ENCODE measurements at regions of chr17 and their contacts with region 1.

Region 1: DNA sequence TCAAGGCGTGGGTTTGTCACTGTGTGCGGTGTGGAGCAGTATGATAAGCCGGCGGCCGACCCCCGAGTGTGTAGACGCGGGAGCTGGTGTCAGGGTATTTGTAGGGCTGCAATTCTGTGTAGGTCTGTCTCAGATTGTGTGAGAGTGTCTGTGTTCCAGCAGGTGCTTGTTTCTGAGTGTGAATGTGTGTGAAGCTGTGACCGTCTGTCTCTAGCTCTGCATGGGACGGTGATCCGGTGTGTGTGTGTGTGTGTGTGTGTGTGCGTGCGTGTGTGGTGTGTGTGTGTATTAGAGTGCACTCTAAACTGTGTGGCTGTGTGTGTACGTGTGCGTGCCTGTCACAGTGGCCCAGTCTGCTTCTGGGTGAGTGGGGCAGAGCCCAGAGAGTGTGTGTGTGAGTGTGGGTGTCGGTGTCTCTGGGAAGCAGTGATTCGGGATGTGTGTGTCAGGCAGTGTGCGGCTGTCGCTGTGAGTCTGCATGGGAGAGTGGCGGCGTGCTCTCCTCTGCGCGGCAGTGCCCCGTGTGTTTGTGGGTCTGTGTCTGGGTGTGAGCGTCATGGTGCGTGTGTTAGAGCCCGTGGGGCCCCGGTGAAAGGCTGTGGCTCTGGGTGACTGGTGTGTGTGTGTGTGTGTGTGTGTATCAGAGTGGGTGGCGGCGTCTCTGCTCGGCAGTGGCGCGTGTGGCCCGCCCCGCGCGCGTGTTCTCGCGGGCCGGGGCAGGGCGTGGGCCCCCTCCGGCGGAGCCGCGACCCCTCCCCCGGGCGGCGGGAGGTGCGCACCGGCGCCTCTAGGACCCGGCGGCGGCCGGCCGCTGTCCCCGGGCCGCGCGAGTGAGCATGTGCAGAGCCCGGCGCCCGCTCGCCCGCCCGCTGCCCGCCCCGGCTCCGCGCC is at the start of gene WSCD1:
- DNase-seq: peak; percentile 13
- H3K4me3 Mint-ChIP-seq: peak within 1 kb of the TSS; percentile 63
- H3K27ac Mint-ChIP-seq: no peak within 1 kb of the TSS
- H3K4me1 Mint-ChIP-seq: peaks cover 10% of the 10 kb centered on the region
- H3K27me3 Mint-ChIP-seq: peaks cover 48% of the 10 kb centered on the region
- total RNA-seq, gene WSCD1: 0.86 to 1.0 TPM

Region 2: GRCh38 chr17:6427279-6427781 is 357.5 kb after region 1 on chr17:
- CTCF ChIA-PET with region 1: no interaction called
- intact Hi-C with region 1: loop called (anchors 5 kb)
- DNase-seq: peak; percentile 75
- H3K4me3 Mint-ChIP-seq: no peak overlapping the region
- H3K27ac Mint-ChIP-seq: peak overlapping the region; percentile 2
- H3K4me1 Mint-ChIP-seq: peaks cover 16% of the 10 kb centered on the region
- H3K27me3 Mint-ChIP-seq: no peaks in the 10 kb centered on the region

Measured in activated naive CD4-positive, alpha-beta T cell treated with anti-CD3 and anti-CD28 coated beads for 36 hours (primary cell).